Endothelial cell of umbilical vein (primary cell): ENCODE measurements at regions of chr15 and their contacts with region 1.

Region 1: DNA sequence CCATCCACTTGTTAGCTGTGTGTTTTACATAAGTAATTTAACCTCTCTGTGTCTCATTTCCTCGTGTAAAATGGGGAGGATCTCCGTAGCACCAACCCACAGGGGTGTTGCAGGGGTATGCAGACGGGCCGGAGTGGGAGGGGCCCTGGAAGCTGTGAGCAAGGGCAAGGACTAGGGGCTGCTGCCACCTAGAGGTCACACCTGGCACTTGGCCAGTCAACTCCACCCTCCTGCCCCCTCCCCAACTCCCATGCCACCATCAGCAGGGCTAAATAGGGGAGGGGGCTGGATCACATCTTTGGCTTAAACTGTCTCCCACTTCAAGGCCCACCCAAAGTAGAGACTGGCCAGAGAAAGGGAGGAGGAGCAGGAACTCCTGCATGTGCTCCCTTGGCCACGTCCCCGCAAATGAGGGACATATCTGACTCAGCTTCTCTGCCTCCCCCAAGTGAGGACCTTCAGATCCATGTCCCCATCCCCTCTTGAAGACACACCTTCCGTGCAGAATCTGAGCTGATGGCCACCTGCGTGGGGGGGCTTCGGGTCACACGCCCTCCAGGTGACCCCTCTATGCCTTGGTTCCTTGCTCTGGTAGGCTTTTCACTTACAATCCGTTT is 2.6 kb downstream of the CCDC9B start:
- DNase-seq: peak; percentile 75
- H3K4me3 ChIP-seq: no peak overlapping the region
- H3K27ac ChIP-seq: peak overlapping the region; percentile 94
- H3K4me1 ChIP-seq: peaks cover 68% of the 10 kb centered on the region
- H3K27me3 ChIP-seq: no peaks in the 10 kb centered on the region
- CTCF ChIP-seq: peak; percentile 75 to 90
- POLR2A ChIP-seq: no peak

Region 2: DNA sequence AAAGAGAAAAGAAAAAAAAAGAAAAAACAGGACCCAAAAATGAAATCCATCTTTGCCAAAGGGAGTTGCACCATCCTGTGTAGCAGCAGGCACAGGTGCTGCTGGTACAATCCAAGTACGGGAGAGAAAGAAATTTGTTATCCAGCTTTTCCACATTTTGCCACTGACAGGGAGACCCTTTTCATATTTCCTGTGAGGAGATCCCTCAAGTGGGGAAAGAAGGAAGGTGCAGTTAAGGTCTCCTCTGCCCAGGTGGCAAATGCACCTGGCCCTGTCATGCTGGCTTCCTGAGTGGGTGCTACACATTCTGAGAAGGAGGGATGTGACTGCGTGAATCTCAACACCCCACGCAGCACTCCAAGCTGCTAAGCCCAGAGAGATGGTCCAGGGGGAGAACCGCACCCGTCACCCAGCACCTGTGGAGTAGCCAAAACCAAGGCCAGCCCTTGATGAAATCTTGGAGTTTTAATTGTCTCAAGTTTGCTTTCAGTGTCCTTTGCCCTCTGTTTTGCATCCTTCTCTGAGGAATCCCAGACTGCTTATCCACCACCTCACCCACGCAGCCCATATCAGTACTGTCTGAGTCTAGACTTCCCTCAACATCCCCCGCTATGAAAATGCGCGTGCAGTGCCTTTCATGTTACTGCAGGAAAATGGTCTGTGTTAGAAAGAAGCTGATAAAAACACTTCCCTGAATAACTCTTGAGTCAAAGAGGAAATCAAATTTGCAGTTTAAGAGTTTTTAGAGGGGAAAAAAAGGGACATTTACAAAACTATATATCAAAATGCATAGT is 899.2 kb before region 1 on chr15:
- CTCF ChIA-PET with region 1: no interaction called
- POLR2A ChIA-PET with region 1: no interaction called
- dilution Hi-C with region 1: no loop called
- intact Hi-C with region 1: no loop called
- DNase-seq: no peak
- H3K4me3 ChIP-seq: no peak overlapping the region
- H3K27ac ChIP-seq: no peak overlapping the region
- H3K4me1 ChIP-seq: peaks cover 18% of the 10 kb centered on the region
- H3K27me3 ChIP-seq: no peaks in the 10 kb centered on the region
- CTCF ChIP-seq: no peak
- POLR2A ChIP-seq: no peak

Region 3: GRCh38 chr15:39976291-39977274 is 361.6 kb before region 1 on chr15:
- CTCF ChIA-PET with region 1: no interaction called
- POLR2A ChIA-PET with region 1: no interaction called
- dilution Hi-C with region 1: no loop called
- intact Hi-C with region 1: no loop called
- DNase-seq: peak; percentile 70
- H3K4me3 ChIP-seq: peak overlapping the region; percentile 2 to 56 (median 37)
- H3K27ac ChIP-seq: peak overlapping the region; percentile 28
- H3K4me1 ChIP-seq: peaks cover 4% of the 10 kb centered on the region
- H3K27me3 ChIP-seq: no peaks in the 10 kb centered on the region
- CTCF ChIP-seq: peak; percentile 30 to 40
- POLR2A ChIP-seq: no peak

Region 4: GRCh38 chr15:40217159-40217824 is 120.9 kb before region 1 on chr15:
- CTCF ChIA-PET with region 1: interaction called, 8 read pairs
- POLR2A ChIA-PET with region 1: no interaction called
- dilution Hi-C with region 1: no loop called
- intact Hi-C with region 1: loop called (anchors 1 kb)
- DNase-seq: peak; percentile 73
- H3K4me3 ChIP-seq: no peak overlapping the region
- H3K27ac ChIP-seq: no peak overlapping the region
- H3K4me1 ChIP-seq: peaks cover 3% of the 10 kb centered on the region
- H3K27me3 ChIP-seq: no peaks in the 10 kb centered on the region
- CTCF ChIP-seq: peak; percentile 60 to 71
- POLR2A ChIP-seq: no peak

Region 5: GRCh38 chr15:40307421-40308211 is 30.5 kb before region 1 on chr15 and contains the start of gene PLCB2:
- CTCF ChIA-PET with region 1: interaction called, 287 read pairs
- POLR2A ChIA-PET with region 1: no interaction called
- dilution Hi-C with region 1: no loop called
- intact Hi-C with region 1: no loop called
- DNase-seq: no peak
- H3K4me3 ChIP-seq: no peak within 1 kb of the TSS
- H3K27ac ChIP-seq: no peak within 1 kb of the TSS
- H3K4me1 ChIP-seq: no peaks in the 10 kb centered on the region
- H3K27me3 ChIP-seq: peaks cover 4 to 5% of the 10 kb centered on the region in 2 experiments
- CTCF ChIP-seq: peak in 1 of 2 donors; percentile 42
- POLR2A ChIP-seq: no peak
- total RNA-seq, gene PLCB2: 1.5 and 4.3 TPM in 2 replicates

Region 6: DNA sequence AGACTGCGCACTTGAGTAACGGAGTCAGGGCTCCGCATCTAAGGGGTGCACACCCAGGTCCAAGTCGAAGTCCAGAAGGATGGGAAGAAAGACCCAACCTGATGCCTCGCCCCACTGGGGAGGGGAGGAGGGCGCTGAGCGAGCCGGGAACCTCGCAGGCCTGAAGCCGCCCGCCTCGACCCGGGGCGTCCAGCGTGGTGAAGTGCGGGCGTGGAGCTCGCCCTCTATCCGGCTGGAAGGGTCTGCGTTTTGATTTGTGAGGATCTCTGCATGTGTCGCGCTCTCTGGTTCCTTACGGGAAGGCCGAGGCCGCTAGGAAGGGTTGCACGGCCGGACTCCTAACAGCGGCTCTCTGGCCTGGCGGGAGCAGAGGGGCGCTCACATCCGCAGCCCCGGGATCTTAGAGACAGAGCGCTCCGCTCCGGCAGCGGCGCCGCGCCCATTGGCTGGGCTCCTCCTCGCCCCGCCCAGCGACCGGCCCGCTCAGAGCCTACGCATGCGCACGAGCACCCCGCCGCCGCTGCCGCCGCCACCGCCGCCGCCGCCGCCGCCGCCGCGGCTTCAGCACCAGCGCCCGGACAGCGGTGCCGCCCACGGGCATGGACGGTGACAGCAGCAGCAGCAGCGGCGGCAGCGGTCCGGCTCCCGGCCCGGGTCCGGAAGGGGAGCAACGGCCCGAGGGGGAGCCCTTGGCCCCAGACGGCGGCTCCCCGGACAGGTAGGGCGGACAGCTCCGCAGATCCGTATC is 19.7 kb after region 1 on chr15 and contains the start of gene DISP2:
- CTCF ChIA-PET with region 1: interaction called, 82 read pairs
- POLR2A ChIA-PET with region 1: no interaction called
- dilution Hi-C with region 1: no loop called
- intact Hi-C with region 1: no loop called
- DNase-seq: peak; percentile 84
- H3K4me3 ChIP-seq: peak within 1 kb of the TSS; percentile 35 to 54 (median 41)
- H3K27ac ChIP-seq: no peak within 1 kb of the TSS
- H3K4me1 ChIP-seq: peaks cover 8% of the 10 kb centered on the region
- H3K27me3 ChIP-seq: peaks cover 9 to 13% of the 10 kb centered on the region in 2 experiments
- CTCF ChIP-seq: no peak
- POLR2A ChIP-seq: no peak
- total RNA-seq, gene DISP2: 0.65 and 1.2 TPM in 2 replicates

Region 7: GRCh38 chr15:40421246-40422157 is 83.4 kb after region 1 on chr15:
- CTCF ChIA-PET with region 1: interaction called, 66 read pairs
- POLR2A ChIA-PET with region 1: no interaction called
- dilution Hi-C with region 1: no loop called
- intact Hi-C with region 1: loop called (anchors 1 kb)
- DNase-seq: peak; percentile 61
- H3K4me3 ChIP-seq: no peak overlapping the region
- H3K27ac ChIP-seq: no peak overlapping the region
- H3K4me1 ChIP-seq: no peaks in the 10 kb centered on the region
- H3K27me3 ChIP-seq: no peaks in the 10 kb centered on the region
- CTCF ChIP-seq: peak; percentile 89 to 99
- POLR2A ChIP-seq: peak; percentile 34